Mammary epithelial cell (primary cell): ENCODE measurements at regions of chr15 and their contacts with region 1.

Region 1: GRCh38 chr15:67920524-67921240 is 80.8 kb upstream of the RNU6-1 start:
- DNase-seq: no peak
- H3K4me3 ChIP-seq: no peak overlapping the region
- H3K27ac ChIP-seq: no peak overlapping the region
- H3K4me1 ChIP-seq: no peaks in the 10 kb centered on the region
- H3K27me3 ChIP-seq: no peaks in the 10 kb centered on the region
- CTCF ChIP-seq: no peak

Region 2: DNA sequence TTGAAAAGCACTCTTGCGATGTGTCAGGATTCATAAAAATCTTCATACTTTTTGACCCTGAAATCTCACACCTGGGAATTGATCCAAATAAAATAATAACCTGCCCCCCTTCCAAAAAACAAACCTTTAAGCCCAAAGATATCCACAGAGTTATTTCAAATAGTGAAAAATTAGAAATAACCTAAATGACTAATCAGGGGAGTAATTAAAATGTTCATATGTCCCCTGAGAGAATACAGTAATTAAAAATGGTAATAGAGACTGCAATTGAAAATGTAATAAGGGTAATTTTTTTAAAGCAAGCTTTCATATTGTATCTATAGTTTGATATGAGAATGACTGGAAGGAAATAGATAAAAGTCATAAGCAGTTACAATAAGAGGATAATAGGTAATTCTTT is 216.4 kb after region 1 on chr15:
- CTCF ChIA-PET with region 1: interaction called, 22 read pairs
- dilution Hi-C with region 1: no loop called
- in situ Hi-C with region 1: no loop called
- intact Hi-C with region 1: no loop called
- DNase-seq: no peak
- H3K4me3 ChIP-seq: no peak overlapping the region
- H3K27ac ChIP-seq: no peak overlapping the region
- H3K4me1 ChIP-seq: peaks cover 17% of the 10 kb centered on the region
- H3K27me3 ChIP-seq: no peaks in the 10 kb centered on the region
- CTCF ChIP-seq: no peak